Activated T-helper 1 cell treated with anti-CD3 and anti-CD28 coated beads, Interleukin-12 subunit alpha, Interleukin-12 subunit beta, Interleukin-2, Interleukin-4 antibody, amounts not matched to agents 30 ng/mL and 10 ng/mL and 1 ng/mL, durations not matched to agents 14 hours and 24 hours and 36 hours (primary cell): ENCODE measurements at regions of chrX and their contacts with region 1.

Region 1: GRCh38 chrX:39891781-39892180 is 206.0 kb downstream of the BCOR start:
- DNase-seq: no peak
- H3K4me3 Mint-ChIP-seq: no peak overlapping the region
- H3K27ac Mint-ChIP-seq: peak overlapping the region; percentile 1
- H3K4me1 Mint-ChIP-seq: peaks cover 20% of the 10 kb centered on the region
- H3K27me3 Mint-ChIP-seq: peaks cover 4% of the 10 kb centered on the region

Region 2: DNA sequence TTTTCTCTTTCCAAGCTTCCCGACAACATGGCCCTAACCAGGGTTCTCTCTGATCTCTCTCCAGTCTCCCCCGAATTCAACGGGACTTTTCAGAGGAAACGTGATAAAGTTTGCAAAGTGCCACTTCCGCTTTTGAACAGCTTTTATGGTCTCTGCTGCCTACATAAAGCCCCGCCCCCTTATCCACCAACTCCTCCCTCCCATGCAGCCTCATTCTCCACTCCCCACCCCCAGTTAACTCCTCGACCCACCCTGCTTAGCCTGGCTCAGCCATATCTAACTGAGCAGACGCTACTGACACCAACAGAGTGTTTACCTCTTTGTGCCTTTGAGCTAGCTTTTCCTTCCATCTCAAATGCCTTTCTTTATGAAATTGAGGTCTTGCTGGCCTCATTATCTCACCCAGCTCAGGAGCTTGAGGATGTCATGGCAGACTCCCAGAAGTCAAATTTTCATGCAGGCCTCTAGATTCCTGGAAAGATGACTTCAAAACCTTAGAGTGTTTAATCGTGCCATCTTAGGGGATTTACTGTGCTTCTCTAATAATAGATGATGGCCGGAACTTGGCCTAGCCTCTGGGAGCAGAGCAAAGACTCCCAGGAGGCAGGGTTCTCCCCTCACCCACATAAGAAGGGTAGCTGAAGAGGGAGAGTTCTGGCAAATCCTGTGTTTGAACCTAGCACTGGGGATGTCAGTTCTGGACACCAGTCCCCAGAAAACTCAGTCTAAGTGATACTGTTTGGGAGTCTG is 400.1 kb before region 1 on chrX:
- intact Hi-C with region 1: no loop called
- DNase-seq: peak; percentile 36
- H3K4me3 Mint-ChIP-seq: peak overlapping the region; percentile 24
- H3K27ac Mint-ChIP-seq: peak overlapping the region; percentile 63
- H3K4me1 Mint-ChIP-seq: peaks cover 41% of the 10 kb centered on the region
- H3K27me3 Mint-ChIP-seq: no peaks in the 10 kb centered on the region

Region 3: DNA sequence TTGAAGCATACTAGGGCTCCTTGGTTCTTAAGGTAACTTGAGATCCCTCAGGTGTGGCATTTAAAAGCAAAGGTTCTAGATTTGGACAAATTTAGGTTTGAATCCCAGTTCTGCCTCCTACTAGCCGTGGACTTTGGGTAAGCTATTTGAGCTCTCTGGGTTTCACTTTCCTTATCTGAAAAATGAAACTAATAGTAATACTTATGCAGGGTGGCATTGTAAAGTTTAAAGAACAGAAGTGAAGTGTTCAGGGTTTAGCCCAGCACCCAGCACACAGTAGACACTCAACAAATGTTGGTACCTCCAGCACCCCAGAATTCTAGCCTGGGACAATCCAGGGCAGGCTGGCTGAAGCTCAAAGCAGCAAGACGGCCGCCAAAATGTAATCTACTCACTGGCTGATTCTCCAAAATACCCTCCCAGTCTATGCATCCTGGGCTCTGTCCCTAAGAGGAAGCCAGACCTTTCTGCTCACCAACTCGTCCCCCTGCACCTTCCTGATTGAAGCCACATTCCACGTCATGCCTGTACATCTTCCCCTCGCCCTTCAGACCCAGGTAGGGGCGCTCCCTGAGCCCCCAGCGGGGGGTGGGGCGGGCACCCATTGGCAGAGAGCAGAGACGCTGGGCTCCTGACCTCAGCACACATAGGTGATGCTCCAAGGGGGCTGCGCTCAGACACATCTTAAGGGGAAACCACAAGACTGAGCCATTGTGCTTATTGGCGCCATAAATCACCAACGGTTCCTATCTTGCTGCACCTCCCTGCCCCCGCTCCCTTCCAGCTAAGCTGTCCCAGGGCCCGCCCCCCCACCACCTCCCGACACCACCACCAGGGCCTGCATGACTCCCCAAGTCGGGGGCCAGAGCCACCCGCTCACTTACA is 45.3 kb after region 1 on chrX:
- intact Hi-C with region 1: loop called (anchors 1 kb)
- DNase-seq: no peak
- H3K4me3 Mint-ChIP-seq: peak overlapping the region; percentile 42
- H3K27ac Mint-ChIP-seq: peak overlapping the region; percentile 76
- H3K4me1 Mint-ChIP-seq: peaks cover 11% of the 10 kb centered on the region
- H3K27me3 Mint-ChIP-seq: no peaks in the 10 kb centered on the region